A673 (cell line): ENCODE measurements at regions of chr1 and their contacts with region 1.

Region 1: GRCh38 chr1:177948336-177948972 is 21.4 kb downstream of the SEC16B start:
- DNase-seq: peak; percentile 93
- H3K4me3 ChIP-seq: no peak overlapping the region
- H3K27ac ChIP-seq: no peak overlapping the region
- H3K4me1 ChIP-seq: peaks cover 49% of the 10 kb centered on the region
- H3K27me3 ChIP-seq: no peaks in the 10 kb centered on the region
- CTCF ChIP-seq: peak; percentile 95

Region 2: DNA sequence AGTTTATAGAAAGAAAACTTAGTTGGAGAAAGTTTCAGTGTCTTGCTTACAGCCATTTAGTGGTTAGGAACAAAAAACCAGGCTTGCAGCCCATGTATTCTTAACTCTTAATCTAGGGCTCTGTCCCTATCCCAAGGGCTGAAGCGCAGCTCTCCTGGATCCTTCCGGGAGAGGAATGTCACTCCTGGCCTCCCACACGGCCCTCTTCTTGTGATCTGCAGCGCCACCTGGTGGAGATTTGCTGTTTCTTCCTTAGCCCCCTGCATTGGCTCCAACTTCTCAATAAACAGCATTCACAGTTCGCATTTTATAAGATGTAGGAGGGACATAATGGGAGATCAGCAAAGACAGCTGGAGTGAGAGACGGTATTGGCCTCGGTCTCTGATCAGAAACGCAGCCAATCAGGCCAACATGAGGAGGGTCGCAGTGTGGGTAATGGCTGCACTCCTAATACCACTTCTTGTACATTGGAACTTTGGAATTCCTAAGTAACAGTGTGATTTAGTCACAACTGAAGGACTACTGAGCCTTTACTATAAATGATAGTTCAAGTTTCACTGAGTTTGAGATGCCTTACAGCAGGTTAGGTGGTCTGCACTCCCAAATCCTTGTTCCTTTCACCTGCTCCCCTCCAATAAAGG is 1067.4 kb before region 1 on chr1:
- CTCF ChIA-PET with region 1: no interaction called
- POLR2A ChIA-PET with region 1: no interaction called
- intact Hi-C with region 1: loop called (anchors 5 kb)
- DNase-seq: peak; percentile 84
- H3K4me3 ChIP-seq: no peak overlapping the region
- H3K27ac ChIP-seq: no peak overlapping the region
- H3K4me1 ChIP-seq: no peaks in the 10 kb centered on the region
- H3K27me3 ChIP-seq: no peaks in the 10 kb centered on the region
- CTCF ChIP-seq: peak; percentile 94

Region 3: GRCh38 chr1:177069490-177069889 is 879.0 kb before region 1 on chr1:
- CTCF ChIA-PET with region 1: no interaction called
- POLR2A ChIA-PET with region 1: no interaction called
- intact Hi-C with region 1: loop called (anchors 10 kb)
- DNase-seq: no peak
- H3K4me3 ChIP-seq: no peak overlapping the region
- H3K27ac ChIP-seq: no peak overlapping the region
- H3K4me1 ChIP-seq: no peaks in the 10 kb centered on the region
- H3K27me3 ChIP-seq: peaks cover 21% of the 10 kb centered on the region
- CTCF ChIP-seq: no peak

Region 4: DNA sequence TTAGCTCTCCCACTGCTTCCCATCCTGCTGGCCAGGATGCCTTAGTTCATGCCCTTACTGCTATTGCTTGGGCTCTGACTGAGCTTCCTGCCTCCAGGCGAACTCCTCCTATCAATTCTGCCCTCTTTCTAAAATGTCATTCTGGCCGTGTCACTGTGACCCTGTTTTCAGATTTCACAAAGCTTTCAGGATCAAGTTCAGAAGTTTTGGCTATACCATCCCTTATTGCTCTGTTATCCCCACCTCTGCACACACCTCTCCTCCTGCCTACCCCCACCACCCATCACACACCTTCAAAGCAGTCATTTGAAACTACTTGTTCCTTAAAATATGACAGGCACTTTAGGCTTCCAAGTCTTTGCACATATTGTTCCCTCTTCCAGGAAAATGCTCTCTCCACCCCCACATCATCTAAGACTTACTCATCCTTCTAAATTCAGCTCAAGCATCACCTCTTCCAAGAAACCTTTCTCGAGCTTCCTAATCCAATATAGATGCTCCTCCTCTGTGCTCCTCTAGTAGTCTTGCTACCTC is 499.6 kb before region 1 on chr1:
- CTCF ChIA-PET with region 1: no interaction called
- POLR2A ChIA-PET with region 1: no interaction called
- intact Hi-C with region 1: loop called (anchors 10 kb)
- DNase-seq: no peak
- H3K4me3 ChIP-seq: no peak overlapping the region
- H3K27ac ChIP-seq: no peak overlapping the region
- H3K4me1 ChIP-seq: peaks cover 18% of the 10 kb centered on the region
- H3K27me3 ChIP-seq: no peaks in the 10 kb centered on the region
- CTCF ChIP-seq: no peak

Region 5: GRCh38 chr1:177780096-177780700 is 168.3 kb before region 1 on chr1:
- CTCF ChIA-PET with region 1: no interaction called
- POLR2A ChIA-PET with region 1: no interaction called
- intact Hi-C with region 1: loop called (anchors 2 kb)
- DNase-seq: peak; percentile 96
- H3K4me3 ChIP-seq: no peak overlapping the region
- H3K27ac ChIP-seq: peak overlapping the region; percentile 81
- H3K4me1 ChIP-seq: peaks cover 34% of the 10 kb centered on the region
- H3K27me3 ChIP-seq: no peaks in the 10 kb centered on the region
- CTCF ChIP-seq: peak; percentile 84

Region 6: DNA sequence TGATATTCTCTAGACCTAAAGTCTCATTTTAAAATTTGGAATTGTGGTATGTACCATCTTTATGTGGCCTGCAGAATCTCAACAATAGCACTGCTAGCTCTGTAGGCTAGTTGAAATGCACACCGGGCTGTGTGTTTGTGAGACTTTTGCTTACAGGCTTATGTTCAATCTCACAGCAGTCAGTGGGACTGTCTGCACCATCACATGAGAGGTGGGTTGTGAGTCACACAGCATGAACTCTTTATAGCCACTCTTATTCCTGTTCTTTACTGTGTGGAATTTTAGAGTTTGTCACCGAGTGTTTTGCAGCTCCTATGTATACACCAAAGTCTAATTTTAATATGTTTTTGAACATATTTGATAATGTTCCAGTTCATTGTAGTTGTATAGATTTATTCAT is 220.1 kb after region 1 on chr1:
- CTCF ChIA-PET with region 1: no interaction called
- POLR2A ChIA-PET with region 1: no interaction called
- intact Hi-C with region 1: no loop called
- DNase-seq: no peak
- H3K4me3 ChIP-seq: no peak overlapping the region
- H3K27ac ChIP-seq: no peak overlapping the region
- H3K4me1 ChIP-seq: peaks cover 3% of the 10 kb centered on the region
- H3K27me3 ChIP-seq: no peaks in the 10 kb centered on the region
- CTCF ChIP-seq: no peak